Activated B cell treated with CpG ODN at 0.5 μM for 24 hours (primary cell): ENCODE measurements at regions of chr14 and their contacts with region 1.

Region 1: DNA sequence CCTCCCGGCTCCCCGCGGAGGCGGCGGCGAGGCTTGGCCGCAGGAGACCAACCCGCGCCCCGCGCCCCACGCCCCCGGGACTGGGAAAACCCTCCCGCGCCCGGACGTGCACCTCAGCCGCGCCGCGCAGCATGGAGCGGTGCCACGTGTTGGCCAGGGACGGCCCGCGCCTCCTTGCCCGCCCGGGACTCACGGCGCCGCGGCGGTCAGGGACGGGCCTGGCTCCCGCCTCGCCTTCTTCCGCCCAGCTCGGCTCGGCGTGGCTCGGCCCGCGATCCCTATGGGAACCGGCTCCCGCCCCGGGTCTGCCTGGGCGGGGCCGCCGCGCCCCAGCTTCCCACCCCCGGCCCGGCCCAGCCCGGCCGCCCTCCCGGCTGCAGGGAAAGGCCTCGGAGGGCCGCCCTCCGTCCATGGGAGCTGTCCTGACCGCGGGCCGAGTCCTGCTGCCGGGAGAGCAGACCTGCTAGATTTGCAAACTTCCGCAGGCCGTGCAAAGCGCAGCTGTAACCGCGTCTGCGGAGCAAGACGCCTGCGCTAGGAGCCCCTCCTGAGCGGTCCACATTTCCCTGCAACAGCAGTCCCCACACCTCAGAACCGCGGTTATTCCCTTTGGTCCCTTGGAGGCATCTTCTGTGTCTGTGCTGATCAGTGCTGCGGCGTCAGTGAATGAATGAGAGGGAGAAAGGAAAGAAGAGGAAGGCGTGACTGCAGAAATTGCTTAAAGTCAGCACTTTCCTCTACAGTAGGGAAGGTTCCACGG is at the start of gene CDKL1:
- DNase-seq: peak; percentile 49
- ATAC-seq: peak; percentile 69
- H3K4me3 Mint-ChIP-seq: peak within 1 kb of the TSS; percentile 87
- H3K27ac Mint-ChIP-seq: peak within 1 kb of the TSS; percentile 68
- H3K4me1 Mint-ChIP-seq: peaks cover 50% of the 10 kb centered on the region
- H3K27me3 Mint-ChIP-seq: no peaks in the 10 kb centered on the region
- CTCF ChIP-seq: no peak
- total RNA-seq, gene CDKL1: 5.2 and 5.9 TPM in 2 replicates

Region 2: GRCh38 chr14:50191499-50191898 is 205.3 kb before region 1 on chr14:
- CTCF ChIA-PET with region 1: no interaction called
- POLR2A ChIA-PET with region 1: no interaction called
- intact Hi-C with region 1: no loop called
- DNase-seq: no peak
- ATAC-seq: no peak
- H3K4me3 Mint-ChIP-seq: no peak overlapping the region
- H3K27ac Mint-ChIP-seq: no peak overlapping the region
- H3K4me1 Mint-ChIP-seq: peaks cover 4% of the 10 kb centered on the region
- H3K27me3 Mint-ChIP-seq: no peaks in the 10 kb centered on the region
- CTCF ChIP-seq: no peak

Region 3: DNA sequence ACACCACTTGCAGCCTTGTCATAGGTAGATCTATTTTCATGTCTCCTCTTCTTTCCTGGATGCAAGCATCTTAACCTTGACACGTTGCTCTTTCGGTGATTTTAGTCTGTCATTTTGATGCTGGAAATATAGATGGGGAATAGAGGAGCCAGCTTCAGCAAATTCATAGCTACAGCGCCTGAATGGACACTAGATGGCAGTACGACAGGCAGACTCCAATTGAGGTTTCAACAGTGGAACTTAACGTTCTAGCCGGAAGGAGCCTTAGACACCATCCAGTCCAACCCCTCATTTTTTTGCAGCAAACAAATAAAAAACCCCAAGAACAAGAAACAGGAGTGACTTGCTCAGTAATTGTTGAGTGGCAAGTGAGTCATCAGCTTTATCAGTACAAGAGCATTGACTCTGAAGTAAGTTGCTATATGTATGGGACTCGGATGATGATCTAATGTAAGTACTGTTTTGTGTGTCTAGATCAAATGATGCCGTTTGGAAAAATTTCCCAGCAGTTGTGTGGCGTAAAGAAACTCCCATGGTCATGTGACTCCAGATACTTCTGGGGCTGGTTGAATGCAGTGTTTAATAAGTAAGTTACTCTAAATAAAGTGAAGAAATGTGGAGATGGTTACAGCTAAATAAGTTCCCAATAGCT is 75.7 kb before region 1 on chr14:
- CTCF ChIA-PET with region 1: interaction called, 10 read pairs
- POLR2A ChIA-PET with region 1: no interaction called
- intact Hi-C with region 1: loop called (anchors 1 kb)
- DNase-seq: no peak
- ATAC-seq: peak; percentile 94
- H3K4me3 Mint-ChIP-seq: no peak overlapping the region
- H3K27ac Mint-ChIP-seq: no peak overlapping the region
- H3K4me1 Mint-ChIP-seq: peaks cover 21% of the 10 kb centered on the region
- H3K27me3 Mint-ChIP-seq: no peaks in the 10 kb centered on the region
- CTCF ChIP-seq: peak; percentile 43

Region 4: GRCh38 chr14:50335389-50335788 is 61.4 kb before region 1 on chr14:
- CTCF ChIA-PET with region 1: no interaction called
- POLR2A ChIA-PET with region 1: interaction called, 11 read pairs
- intact Hi-C with region 1: no loop called
- DNase-seq: no peak
- ATAC-seq: no peak
- H3K4me3 Mint-ChIP-seq: no peak overlapping the region
- H3K27ac Mint-ChIP-seq: peak overlapping the region; percentile 36
- H3K4me1 Mint-ChIP-seq: peaks cover 14% of the 10 kb centered on the region
- H3K27me3 Mint-ChIP-seq: no peaks in the 10 kb centered on the region
- CTCF ChIP-seq: no peak

Region 5: GRCh38 chr14:50342221-50343078 is 54.4 kb before region 1 on chr14:
- CTCF ChIA-PET with region 1: no interaction called
- POLR2A ChIA-PET with region 1: interaction called, 5 read pairs
- intact Hi-C with region 1: loop called (anchors 1 kb)
- DNase-seq: no peak
- ATAC-seq: peak; percentile 36
- H3K4me3 Mint-ChIP-seq: no peak overlapping the region
- H3K27ac Mint-ChIP-seq: peak overlapping the region; percentile 19
- H3K4me1 Mint-ChIP-seq: peaks cover 21% of the 10 kb centered on the region
- H3K27me3 Mint-ChIP-seq: no peaks in the 10 kb centered on the region
- CTCF ChIP-seq: no peak

Region 6: DNA sequence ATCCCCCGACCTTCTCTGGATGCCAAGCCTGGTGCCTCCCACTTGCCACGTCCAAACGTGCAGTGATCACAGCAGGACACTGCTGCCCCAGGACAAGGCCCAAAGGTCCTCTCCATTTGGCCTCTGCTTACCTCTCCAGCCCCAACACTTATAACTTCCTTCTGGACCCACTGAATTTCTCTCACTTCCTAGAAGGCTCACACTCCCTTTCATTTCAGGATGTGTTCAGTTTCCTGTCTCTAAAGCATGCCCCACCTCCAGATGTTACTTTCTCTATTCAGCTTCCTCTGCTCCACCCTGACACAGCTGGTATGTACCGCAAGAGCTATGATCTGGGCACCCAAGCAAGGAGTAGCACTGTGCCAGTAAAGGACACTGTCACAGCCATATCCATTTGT is 33.1 kb before region 1 on chr14:
- CTCF ChIA-PET with region 1: no interaction called
- POLR2A ChIA-PET with region 1: interaction called, 7 read pairs
- intact Hi-C with region 1: loop called (anchors 1 kb)
- DNase-seq: peak; percentile 27
- ATAC-seq: peak; percentile 99
- H3K4me3 Mint-ChIP-seq: peak overlapping the region; percentile 84
- H3K27ac Mint-ChIP-seq: peak overlapping the region; percentile 97
- H3K4me1 Mint-ChIP-seq: peaks cover 44% of the 10 kb centered on the region
- H3K27me3 Mint-ChIP-seq: no peaks in the 10 kb centered on the region
- CTCF ChIP-seq: no peak

Region 7: GRCh38 chr14:50373959-50374358 is 22.9 kb before region 1 on chr14:
- CTCF ChIA-PET with region 1: no interaction called
- POLR2A ChIA-PET with region 1: no interaction called
- intact Hi-C with region 1: no loop called
- DNase-seq: no peak
- ATAC-seq: no peak
- H3K4me3 Mint-ChIP-seq: no peak overlapping the region
- H3K27ac Mint-ChIP-seq: no peak overlapping the region
- H3K4me1 Mint-ChIP-seq: no peaks in the 10 kb centered on the region
- H3K27me3 Mint-ChIP-seq: no peaks in the 10 kb centered on the region
- CTCF ChIP-seq: no peak